Activated CD4-positive, alpha-beta T cell treated with anti-CD3 and anti-CD28 coated beads for 36 hours (primary cell): ENCODE measurements at regions of chr17 and their contacts with region 1.

Region 1: GRCh38 chr17:49997791-49998703 is 3.0 kb upstream of the DLX3 start:
- DNase-seq: peak; percentile 92
- ATAC-seq: peak; percentile 86
- H3K4me3 Mint-ChIP-seq: no peak overlapping the region
- H3K27ac Mint-ChIP-seq: no peak overlapping the region
- H3K4me1 Mint-ChIP-seq: peaks cover 23% of the 10 kb centered on the region
- H3K27me3 Mint-ChIP-seq: peaks cover 56% of the 10 kb centered on the region

Region 2: GRCh38 chr17:49851387-49852291 is 146.4 kb before region 1 on chr17:
- CTCF ChIA-PET with region 1: interaction called, 138 read pairs
- POLR2A ChIA-PET with region 1: interaction called, 4 read pairs
- intact Hi-C with region 1: no loop called
- DNase-seq: peak; percentile 83
- ATAC-seq: peak; percentile 74
- H3K4me3 Mint-ChIP-seq: peak overlapping the region; percentile 76
- H3K27ac Mint-ChIP-seq: peak overlapping the region; percentile 84
- H3K4me1 Mint-ChIP-seq: peaks cover 13% of the 10 kb centered on the region
- H3K27me3 Mint-ChIP-seq: peaks cover 1% of the 10 kb centered on the region

Region 3: DNA sequence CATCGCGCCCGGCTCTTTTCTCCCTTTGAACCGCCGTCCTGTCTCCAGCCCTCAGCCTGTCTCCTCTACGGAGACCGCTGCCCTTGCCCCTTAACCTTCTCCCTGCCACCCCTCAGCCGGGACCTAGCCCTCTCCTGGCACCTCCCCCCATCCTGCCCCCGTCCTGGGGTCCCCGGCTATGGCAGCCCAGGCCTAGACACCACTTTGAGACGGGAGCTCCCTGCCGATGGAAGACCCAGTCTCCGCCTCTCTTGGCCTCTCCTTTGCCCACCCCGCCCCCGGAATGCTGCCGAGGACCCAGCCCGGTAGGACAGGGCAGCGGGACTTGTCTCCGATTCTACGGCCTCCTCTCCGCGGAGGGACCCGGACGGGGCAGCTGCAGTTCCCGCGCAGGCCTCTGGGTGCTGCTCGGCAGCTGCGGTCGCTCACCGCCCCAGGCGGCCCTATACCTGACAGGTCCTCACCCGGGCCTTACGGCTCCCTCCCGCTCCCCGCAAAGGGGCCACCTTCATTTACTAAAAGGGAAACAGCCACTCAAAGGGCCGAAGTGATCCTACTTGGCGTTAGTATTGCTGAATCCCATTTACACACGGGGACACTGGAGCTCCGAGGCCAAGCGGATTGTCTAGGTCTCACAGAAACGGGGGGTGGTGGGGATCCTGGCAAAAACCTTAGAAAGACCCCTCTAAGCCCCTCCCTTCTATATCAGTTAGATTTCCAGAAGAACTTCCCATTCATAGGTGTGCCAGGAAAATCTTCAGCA is 117.6 kb before region 1 on chr17:
- CTCF ChIA-PET with region 1: interaction called, 79 read pairs
- POLR2A ChIA-PET with region 1: no interaction called
- intact Hi-C with region 1: loop called (anchors 1 kb)
- DNase-seq: peak; percentile 89
- ATAC-seq: peak; percentile 99
- H3K4me3 Mint-ChIP-seq: no peak overlapping the region
- H3K27ac Mint-ChIP-seq: no peak overlapping the region
- H3K4me1 Mint-ChIP-seq: peaks cover 7% of the 10 kb centered on the region
- H3K27me3 Mint-ChIP-seq: peaks cover 34% of the 10 kb centered on the region

Region 4: GRCh38 chr17:49939318-49939717 is 58.7 kb before region 1 on chr17:
- CTCF ChIA-PET with region 1: interaction called, 14 read pairs
- POLR2A ChIA-PET with region 1: interaction called, 3 read pairs
- intact Hi-C with region 1: no loop called
- DNase-seq: no peak
- ATAC-seq: no peak
- H3K4me3 Mint-ChIP-seq: no peak overlapping the region
- H3K27ac Mint-ChIP-seq: no peak overlapping the region
- H3K4me1 Mint-ChIP-seq: no peaks in the 10 kb centered on the region
- H3K27me3 Mint-ChIP-seq: peaks cover 20% of the 10 kb centered on the region

Region 5: DNA sequence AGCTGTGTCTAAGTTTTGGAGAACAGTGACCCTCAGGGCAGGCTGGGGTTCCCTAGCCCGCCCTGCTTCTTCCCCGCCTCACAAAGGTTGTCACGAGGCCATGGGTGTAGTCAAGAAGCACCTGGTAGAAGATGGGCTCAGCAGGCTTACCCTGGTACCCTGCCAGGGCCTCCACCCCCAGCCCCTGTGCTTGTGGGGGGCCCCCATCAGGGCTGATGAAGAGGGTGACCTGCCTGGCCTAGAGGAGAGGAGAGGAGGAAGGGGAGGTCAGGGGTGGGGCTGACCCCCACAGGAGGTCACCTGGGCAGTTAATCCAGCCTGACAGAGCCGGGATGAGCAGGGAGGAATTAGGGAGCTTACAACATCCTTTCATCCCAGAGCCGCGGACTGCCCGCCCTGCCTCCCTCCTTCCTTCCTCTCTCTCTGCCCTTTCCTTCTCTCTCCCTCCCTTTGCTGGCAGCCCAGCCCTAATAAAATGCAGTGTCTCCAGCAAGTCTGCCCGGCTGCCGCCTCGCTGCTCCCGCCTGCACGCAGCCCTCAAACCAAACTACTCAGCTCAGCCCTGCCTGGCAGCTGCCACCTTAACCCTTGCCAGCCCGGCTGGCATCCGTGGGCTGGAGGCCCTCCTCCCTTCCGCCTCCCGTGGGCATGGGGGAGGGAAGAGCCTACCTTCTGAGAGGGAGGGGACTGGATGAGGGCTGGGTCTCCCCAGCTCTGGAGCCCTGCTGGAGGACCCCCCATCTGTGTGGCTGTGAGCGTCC is 10.2 kb before region 1 on chr17:
- CTCF ChIA-PET with region 1: interaction called, 28 read pairs
- POLR2A ChIA-PET with region 1: interaction called, 5 read pairs
- intact Hi-C with region 1: no loop called
- DNase-seq: no peak
- ATAC-seq: no peak
- H3K4me3 Mint-ChIP-seq: no peak overlapping the region
- H3K27ac Mint-ChIP-seq: no peak overlapping the region
- H3K4me1 Mint-ChIP-seq: no peaks in the 10 kb centered on the region
- H3K27me3 Mint-ChIP-seq: peaks cover 34% of the 10 kb centered on the region